ENCODE measurements at regions of chr4 and their contacts with region 1.

Region 1: DNA sequence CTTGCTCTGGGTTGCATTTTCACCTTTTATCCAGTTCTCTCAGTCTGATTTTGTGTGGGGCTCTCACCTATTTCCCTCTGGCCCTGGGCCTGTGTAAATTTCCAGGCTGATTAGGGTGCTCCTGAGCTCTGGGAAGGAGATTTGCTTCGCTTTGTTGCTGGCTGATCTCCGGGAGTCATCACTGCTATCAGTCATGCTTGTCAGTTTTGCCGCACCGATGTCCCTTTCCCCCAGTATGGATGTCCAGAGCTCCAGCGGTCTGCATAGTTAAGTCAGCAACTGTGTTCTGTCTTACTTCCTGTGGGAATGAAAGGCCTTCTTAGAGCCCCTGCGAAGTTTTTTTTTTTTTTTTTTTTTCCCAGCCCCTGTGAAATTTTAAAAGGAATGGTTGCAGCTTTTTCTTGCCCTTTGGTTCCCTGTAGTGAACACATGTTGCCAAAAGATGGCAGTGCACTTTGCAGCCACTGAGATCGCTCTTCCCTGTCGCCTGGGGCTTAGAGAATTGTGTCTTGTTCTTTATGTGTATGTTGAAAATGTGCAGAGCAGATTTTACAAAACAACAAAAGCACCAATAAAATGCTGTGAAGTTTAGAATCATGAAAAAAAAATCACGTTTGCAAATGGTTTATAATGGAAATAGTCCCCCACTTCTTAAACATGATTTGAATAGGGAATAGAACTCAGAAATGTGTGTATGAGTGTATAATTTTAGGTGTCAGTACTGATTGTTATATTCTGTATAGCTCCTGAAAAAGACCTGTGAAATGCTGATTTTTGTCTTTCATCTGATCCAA is 109.1 kb upstream of the SLC4A4 start:
- DNase-seq: peak in 1 of 2 experiments; percentile 5
- H3K4me3 ChIP-seq: no peak overlapping the region
- H3K27ac ChIP-seq: no peak overlapping the region
- H3K4me1 ChIP-seq: peaks cover 0 to 9% (median 5%) of the 10 kb centered on the region in 4 experiments; a peak in 4 of 7 replicates
- H3K27me3 ChIP-seq: no peaks in the 10 kb centered on the region
- CTCF ChIP-seq: peak; percentile 51 to 66 (median 60)
- EP300 ChIP-seq: no peak
- POLR2A ChIP-seq: no peak
- RAD21 ChIP-seq: peak; percentile 70 to 72

Region 2: DNA sequence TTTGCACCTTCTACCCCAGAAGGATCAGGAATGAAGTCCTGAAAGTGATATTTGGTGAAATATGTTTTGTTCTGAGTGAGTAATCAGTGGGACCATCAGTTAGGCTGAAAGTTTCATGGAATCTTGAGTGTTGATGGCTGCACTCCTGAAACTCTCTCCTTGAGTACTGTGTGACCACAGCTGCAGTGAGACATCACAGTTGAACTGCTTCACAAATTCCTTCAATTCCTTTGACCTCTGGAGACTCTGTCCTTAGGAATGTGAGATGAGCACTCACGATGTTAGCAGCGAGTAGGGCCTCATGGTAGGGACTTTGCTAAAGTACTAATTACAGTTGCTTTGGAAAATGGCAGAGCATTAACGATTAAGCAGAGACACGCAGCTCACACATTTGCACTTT is 33.8 kb before region 1 on chr4:
- CTCF ChIA-PET with region 1: interaction called, 12 read pairs
- POLR2A ChIA-PET with region 1: no interaction called
- DNase-seq: no peak
- H3K4me3 ChIP-seq: no peak overlapping the region
- H3K27ac ChIP-seq: no peak overlapping the region
- H3K4me1 ChIP-seq: peaks cover 0 to 5% (median 0%) of the 10 kb centered on the region in 4 experiments; a peak in 3 of 7 replicates
- H3K27me3 ChIP-seq: no peaks in the 10 kb centered on the region
- CTCF ChIP-seq: no peak
- EP300 ChIP-seq: no peak
- POLR2A ChIP-seq: no peak
- RAD21 ChIP-seq: no peak

Region 3: DNA sequence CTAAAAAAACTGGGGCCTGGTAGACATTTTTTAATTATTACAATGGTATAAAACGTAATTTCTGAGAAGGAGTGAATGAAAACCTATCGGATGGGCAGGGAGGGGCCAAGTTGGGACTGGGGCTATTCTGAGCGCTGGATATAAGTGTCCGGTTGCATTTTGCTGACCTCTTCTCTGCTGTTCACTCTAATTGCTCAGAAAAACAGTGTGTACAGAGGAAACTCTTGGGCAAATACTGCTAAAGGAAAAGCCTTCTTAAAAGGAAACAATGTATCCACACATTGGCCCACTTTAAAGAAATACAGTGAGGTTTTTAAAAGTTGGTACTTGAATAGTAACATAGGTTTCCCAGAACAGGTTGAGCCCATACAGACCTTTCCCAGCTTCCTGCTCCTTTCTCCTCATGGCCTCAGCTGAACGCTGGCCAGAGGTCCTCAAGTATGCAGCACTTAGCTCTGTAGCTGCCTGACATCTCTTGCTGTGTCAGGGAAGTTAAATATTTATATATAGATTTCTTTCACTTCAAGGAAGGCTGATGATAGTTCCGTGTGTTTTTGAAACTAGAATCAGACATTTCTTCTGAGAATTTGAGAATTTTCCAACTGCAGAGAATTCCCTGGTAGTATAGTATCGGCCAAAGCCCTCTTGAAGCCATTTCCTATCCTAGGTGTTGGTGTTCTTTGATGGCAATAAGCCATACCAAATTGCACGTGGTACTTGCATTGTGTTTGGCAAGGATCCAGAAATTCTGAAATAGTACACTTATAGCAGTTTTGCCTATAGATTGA is 12.0 kb after region 1 on chr4:
- CTCF ChIA-PET with region 1: interaction called, 21 read pairs
- POLR2A ChIA-PET with region 1: no interaction called
- DNase-seq: no peak
- H3K4me3 ChIP-seq: no peak overlapping the region
- H3K27ac ChIP-seq: no peak overlapping the region
- H3K4me1 ChIP-seq: no peaks in the 10 kb centered on the region
- H3K27me3 ChIP-seq: no peaks in the 10 kb centered on the region
- CTCF ChIP-seq: no peak
- EP300 ChIP-seq: no peak
- POLR2A ChIP-seq: no peak
- RAD21 ChIP-seq: no peak

Region 4: GRCh38 chr4:71259911-71260331 is 30.2 kb after region 1 on chr4:
- CTCF ChIA-PET with region 1: interaction called, 10 read pairs
- POLR2A ChIA-PET with region 1: no interaction called
- DNase-seq: no peak
- H3K4me3 ChIP-seq: no peak overlapping the region
- H3K27ac ChIP-seq: no peak overlapping the region
- H3K4me1 ChIP-seq: peaks cover 0 to 5% (median 0%) of the 10 kb centered on the region in 4 experiments; a peak in 1 of 7 replicates
- H3K27me3 ChIP-seq: no peaks in the 10 kb centered on the region
- CTCF ChIP-seq: no peak
- EP300 ChIP-seq: no peak
- POLR2A ChIP-seq: no peak
- RAD21 ChIP-seq: no peak

Region 5: GRCh38 chr4:71343670-71344466 is 114.2 kb after region 1 on chr4:
- CTCF ChIA-PET with region 1: no interaction called
- POLR2A ChIA-PET with region 1: no interaction called
- DNase-seq: no peak
- H3K4me3 ChIP-seq: no peak overlapping the region
- H3K27ac ChIP-seq: no peak overlapping the region
- H3K4me1 ChIP-seq: no peaks in the 10 kb centered on the region
- H3K27me3 ChIP-seq: no peaks in the 10 kb centered on the region
- CTCF ChIP-seq: no peak
- EP300 ChIP-seq: no peak
- POLR2A ChIP-seq: no peak
- RAD21 ChIP-seq: no peak

Measured in H1 (cell line).